ENCODE measurements at regions of chr20 and their contacts with region 1.

Region 1: DNA sequence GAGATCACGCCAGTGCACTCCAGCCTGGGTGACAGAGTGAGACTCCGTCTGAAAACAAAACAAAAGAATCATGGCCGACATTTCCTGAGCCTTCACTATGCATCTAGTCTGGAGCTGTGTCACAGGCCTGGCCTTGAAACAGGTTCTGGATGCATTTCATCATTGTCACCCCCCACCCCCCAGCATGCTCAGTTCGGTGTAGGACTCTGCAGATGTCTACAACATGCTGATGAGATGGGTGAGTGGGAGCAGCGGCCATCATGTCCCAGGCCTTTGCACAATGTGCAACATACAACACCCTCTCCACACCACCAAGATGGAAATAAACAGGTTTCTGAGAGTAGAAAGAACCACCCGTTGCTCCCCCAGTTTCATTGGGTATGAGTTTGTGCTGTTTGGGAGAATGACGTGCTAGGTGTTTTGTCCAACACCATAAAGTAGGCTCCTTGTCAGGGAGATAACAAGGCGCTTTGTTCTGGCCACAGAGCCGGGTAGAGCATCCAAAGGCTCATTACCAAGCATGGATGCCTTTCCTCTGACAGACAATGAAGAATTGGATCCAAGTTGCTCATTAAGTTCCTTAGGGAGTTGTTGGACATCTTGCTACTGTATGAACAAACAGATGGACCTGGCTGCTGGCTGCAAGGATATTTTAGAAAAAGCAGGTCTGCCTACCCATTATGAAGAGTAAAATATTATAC is 22.1 kb downstream of the SNHG17 start:
- DNase-seq: no peak
- ATAC-seq: no peak
- H3K4me3 ChIP-seq: no peak overlapping the region
- H3K27ac ChIP-seq: no peak overlapping the region
- H3K4me1 ChIP-seq: no peaks in the 10 kb centered on the region
- H3K27me3 ChIP-seq: no peaks in the 10 kb centered on the region
- CTCF ChIP-seq: no peak
- EP300 ChIP-seq: no peak
- POLR2A ChIP-seq: no peak
- RAD21 ChIP-seq: no peak

Region 2: DNA sequence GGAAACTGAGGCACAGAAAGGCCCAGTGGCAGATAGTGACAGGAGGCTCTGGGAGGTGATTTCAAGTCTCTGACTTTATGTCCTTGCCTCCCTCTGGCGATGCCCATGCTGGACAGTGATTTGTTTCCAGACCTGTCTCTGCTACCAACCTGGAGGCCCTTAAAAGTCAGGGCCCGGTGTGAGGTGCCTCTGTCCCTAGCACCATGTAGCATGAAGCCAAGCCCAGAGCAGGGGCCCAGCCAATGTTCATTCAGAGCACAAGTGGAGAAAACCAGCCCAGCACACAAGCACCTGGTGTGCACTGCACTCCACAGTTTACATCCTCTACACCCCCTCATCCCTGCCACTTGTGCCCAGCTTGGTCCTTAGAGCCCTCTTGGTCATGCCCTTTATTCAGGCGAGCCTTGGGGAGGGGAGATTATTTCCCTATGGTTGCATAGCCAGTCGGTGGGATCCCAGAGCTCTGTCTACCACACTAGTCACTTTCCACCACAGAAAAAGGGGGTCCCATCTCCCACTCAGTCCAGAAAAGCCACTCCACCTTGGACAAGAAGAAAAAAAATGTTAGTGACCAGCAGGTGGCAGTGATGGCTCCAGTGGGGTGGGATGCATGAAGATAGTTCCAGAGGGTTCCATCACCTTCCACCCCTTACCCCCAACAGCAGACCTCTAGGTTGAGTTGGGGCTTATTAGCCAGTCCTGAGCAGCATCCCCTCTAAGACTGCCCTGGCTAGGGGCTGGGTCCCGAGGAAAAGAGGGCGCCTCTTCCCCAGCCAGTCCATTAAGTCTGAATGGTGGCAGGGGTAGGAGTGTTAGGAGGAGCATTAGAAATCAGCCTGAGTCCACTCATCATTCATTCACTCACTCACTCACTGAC is 183.4 kb before region 1 on chr20:
- CTCF ChIA-PET with region 1: no interaction called
- POLR2A ChIA-PET with region 1: no interaction called
- in situ Hi-C with region 1: no loop called
- intact Hi-C with region 1: loop called (anchors 1 kb)
- DNase-seq: peak in 3 of 4 experiments; percentile 28 to 57 (median 51)
- ATAC-seq: peak; percentile 45; the same call in 2 of the 3 replicates
- H3K4me3 ChIP-seq: no peak overlapping the region
- H3K27ac ChIP-seq: no peak overlapping the region
- H3K4me1 ChIP-seq: no peaks in the 10 kb centered on the region
- H3K27me3 ChIP-seq: peaks cover 7 to 42% of the 10 kb centered on the region in 2 experiments; a peak in 4 of 5 replicates
- CTCF ChIP-seq: peak; percentile 43 to 52 (median 48); a peak in 5 of 6 replicates
- EP300 ChIP-seq: no peak
- POLR2A ChIP-seq: no peak
- RAD21 ChIP-seq: peak in 1 of 2 experiments; percentile 40; a peak in 2 of 4 replicates

Region 3: DNA sequence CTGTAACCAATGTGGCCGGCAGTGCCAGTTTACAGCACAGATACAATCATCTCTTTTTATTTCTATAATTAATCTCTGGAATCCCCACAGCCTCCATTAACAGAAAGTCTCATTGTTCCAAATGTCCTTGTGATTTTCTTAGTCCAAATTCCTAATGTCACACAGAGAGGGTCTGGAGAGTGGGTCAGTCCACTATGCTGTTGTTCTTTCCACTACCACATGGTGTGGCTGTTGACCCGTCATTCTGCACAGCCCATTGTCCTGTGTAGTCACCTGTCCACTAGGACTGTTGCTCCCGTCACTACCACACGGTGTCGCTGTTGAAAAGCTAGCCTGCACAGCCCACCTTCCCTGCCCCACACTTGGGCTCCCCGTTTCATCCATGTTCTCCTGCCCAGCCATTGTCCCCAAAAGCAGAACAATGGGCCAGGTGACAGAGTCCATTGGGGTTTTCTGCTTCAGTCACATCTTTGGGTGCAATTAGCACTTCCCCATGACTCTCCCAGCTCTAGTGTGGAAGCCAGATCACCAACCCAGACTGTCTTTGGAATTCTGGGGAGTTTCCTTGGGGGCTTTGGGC is 75.4 kb before region 1 on chr20:
- CTCF ChIA-PET with region 1: interaction called, 53 read pairs
- POLR2A ChIA-PET with region 1: interaction called, 9 read pairs
- in situ Hi-C with region 1: loop called (anchors 5 kb)
- intact Hi-C with region 1: loop called (anchors 1 kb)
- DNase-seq: peak; percentile 82 to 89 (median 85)
- ATAC-seq: peak; percentile 99
- H3K4me3 ChIP-seq: no peak overlapping the region
- H3K27ac ChIP-seq: no peak overlapping the region
- H3K4me1 ChIP-seq: peaks cover 7 to 10% of the 10 kb centered on the region in 2 experiments; a peak in 3 of 5 replicates
- H3K27me3 ChIP-seq: peaks cover 13 to 30% of the 10 kb centered on the region in 2 experiments; a peak in 4 of 5 replicates
- CTCF ChIP-seq: peak; percentile 99 to 100 (median 99)
- EP300 ChIP-seq: no peak
- POLR2A ChIP-seq: no peak
- RAD21 ChIP-seq: peak; percentile 96 to 99

Region 4: GRCh38 chr20:38343311-38344106 is 69.5 kb before region 1 on chr20:
- CTCF ChIA-PET with region 1: interaction called, 53 read pairs
- POLR2A ChIA-PET with region 1: no interaction called
- in situ Hi-C with region 1: loop called (anchors 5 kb)
- intact Hi-C with region 1: no loop called
- DNase-seq: peak; percentile 55 to 85 (median 60)
- ATAC-seq: peak; percentile 84
- H3K4me3 ChIP-seq: no peak overlapping the region
- H3K27ac ChIP-seq: peak overlapping the region; percentile 71
- H3K4me1 ChIP-seq: peaks cover 20 to 25% of the 10 kb centered on the region in 2 experiments
- H3K27me3 ChIP-seq: no peaks in the 10 kb centered on the region; a peak in 1 of 5 replicates
- CTCF ChIP-seq: no peak
- EP300 ChIP-seq: peak; percentile 23; the same call in 1 of the 2 replicates
- POLR2A ChIP-seq: no peak
- RAD21 ChIP-seq: no peak